ENCODE measurements at regions of chr5 and their contacts with region 1.

Region 1: DNA sequence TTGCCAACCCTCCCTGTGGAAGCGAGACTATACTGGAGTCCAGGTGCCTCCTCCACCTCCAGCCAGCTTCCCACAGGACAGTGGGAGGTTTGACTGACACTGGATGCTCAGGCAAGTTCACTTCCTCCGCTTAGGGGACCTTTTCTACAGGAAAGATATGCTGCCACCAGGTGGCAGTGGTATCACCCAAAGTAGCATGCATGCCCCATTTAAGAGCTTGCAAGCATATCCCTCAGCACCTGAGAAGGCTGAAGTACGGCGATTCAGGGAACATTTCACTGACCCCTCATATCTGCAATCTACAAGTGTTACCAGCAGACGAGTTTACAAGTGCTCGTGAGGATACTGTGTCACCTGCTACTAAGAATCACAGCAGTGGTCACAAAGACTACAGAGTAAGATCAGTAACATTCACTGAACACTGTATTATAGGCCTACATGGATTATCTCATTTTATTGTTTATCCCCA is 75.5 kb downstream of the KLHL3 start:
- DNase-seq: peak; percentile 52
- H3K4me3 Mint-ChIP-seq: no peak overlapping the region
- H3K27ac Mint-ChIP-seq: no peak overlapping the region
- H3K4me1 Mint-ChIP-seq: peaks cover 7% of the 10 kb centered on the region
- H3K27me3 Mint-ChIP-seq: no peaks in the 10 kb centered on the region

Region 2: DNA sequence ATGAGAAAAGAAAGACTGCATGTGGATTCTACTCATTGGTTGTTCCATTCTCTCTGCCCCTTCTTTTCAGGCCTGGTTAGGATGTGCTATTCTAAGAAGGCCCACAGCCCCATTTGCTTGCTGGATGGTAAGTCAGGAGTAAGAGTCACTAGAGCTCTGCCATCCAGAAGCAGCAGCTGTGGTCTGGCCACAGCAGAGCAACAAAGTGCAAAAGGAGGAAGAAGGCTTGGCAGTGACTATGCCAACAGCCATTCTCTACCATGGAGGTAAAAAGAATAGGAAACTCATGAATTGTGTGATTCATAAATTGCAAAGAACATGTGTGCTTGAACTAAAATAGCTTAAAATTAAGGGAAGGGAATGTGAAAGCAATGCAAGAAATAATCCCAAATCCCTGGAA is 54.6 kb after region 1 on chr5:
- intact Hi-C with region 1: no loop called
- DNase-seq: no peak
- H3K4me3 Mint-ChIP-seq: no peak overlapping the region
- H3K27ac Mint-ChIP-seq: no peak overlapping the region
- H3K4me1 Mint-ChIP-seq: no peaks in the 10 kb centered on the region
- H3K27me3 Mint-ChIP-seq: no peaks in the 10 kb centered on the region

Region 3: DNA sequence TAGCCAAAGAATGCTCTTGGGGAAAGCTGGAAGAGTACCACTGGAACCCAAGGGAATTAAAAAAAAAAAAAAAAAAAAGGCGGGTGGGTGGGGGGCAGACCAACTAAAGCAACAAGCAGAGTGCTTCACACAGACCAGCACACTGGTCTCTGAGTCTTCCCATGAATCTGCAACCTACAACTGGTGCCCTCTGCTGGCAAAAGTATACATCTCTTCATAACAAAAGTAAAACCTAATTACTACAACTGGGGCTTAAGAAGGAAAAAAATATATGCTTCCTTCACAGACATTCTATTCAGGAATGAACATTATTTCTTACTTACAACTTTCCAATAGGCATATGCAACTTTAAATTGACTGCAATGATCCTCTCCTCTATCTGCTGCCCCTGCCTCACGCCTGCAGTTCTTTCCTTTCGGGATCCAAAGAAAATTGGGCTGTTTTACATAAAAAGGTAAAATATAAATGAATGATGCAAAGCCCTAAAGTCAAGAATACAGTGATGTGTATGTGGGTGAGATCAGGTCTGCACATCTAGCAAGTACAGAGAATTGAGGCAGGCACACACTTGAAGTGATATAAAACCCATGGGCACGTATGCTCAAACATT is 82.8 kb after region 1 on chr5:
- intact Hi-C with region 1: loop called (anchors 1 kb)
- DNase-seq: peak; percentile 43
- H3K4me3 Mint-ChIP-seq: no peak overlapping the region
- H3K27ac Mint-ChIP-seq: no peak overlapping the region
- H3K4me1 Mint-ChIP-seq: no peaks in the 10 kb centered on the region
- H3K27me3 Mint-ChIP-seq: no peaks in the 10 kb centered on the region

Measured in activated T-helper 2 cell treated with anti-CD3 and anti-CD28 coated beads, Interferon-gamma antibody, Interleukin-2, Interleukin-4, amounts not matched to agents 10 μg/mL and 5 μg/mL and 100 μg/mL, durations not matched to agents 14 hours and 24 hours and 36 hours (primary cell).